Posterior vena cava (tissue), 2 donors: ENCODE measurements at regions of chr4 and their contacts with region 1.

Region 1: DNA sequence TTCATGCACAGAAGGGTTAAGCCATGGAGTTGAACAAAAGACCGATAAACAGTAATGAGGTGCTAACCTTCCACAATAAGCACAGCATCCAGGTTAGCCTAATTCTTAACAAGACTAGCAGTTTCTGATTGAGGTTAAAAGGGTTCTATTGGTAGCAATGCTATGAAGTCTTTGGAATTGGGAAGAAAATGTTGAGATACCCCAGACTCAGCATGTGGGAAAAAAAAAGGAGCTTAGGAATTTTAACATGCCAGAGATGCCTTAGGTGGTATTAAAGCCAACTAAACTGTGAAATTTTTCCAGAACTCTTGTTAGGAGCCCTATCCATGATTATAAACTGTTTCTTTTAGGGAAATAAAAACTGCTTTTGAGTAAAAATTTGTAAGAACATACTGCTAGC is 391.7 kb downstream of the GABRG1 start:
- DNase-seq: no peak

Region 2: DNA sequence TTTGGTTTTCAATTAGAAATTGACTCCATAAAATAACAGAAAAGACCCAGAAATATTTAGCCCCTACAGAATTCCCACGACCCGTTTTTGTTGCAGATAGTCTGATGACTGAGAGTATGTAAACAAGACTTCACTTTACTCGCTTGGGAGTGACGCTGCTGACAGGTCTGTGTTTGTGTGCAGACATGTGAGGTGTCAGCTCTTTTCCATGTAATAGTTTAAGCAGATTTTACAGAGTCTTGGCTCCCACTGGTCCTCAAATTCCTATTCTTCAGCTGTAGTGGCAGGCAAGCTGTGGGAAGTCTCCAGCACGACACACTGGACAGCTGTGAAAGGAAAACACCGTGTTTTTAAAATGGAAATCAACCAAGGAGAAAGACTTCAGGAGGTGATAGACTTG is 64.0 kb before region 1 on chr4:
- intact Hi-C with region 1: loop called in 1 of 2 experiments (anchors 5 kb)
- DNase-seq: no peak

Region 3: GRCh38 chr4:45716093-45716492 is 16.1 kb before region 1 on chr4:
- intact Hi-C with region 1: no loop called
- DNase-seq: no peak